OCI-LY7 (cell line): ENCODE measurements at regions of chr3 and their contacts with region 1.

Region 1: GRCh38 chr3:133573054-133573628 is 345 bp upstream of the CDV3 start:
- DNase-seq: peak; percentile 100
- H3K4me3 ChIP-seq: peak overlapping the region; percentile 87
- H3K27ac ChIP-seq: peak overlapping the region; percentile 98
- H3K4me1 ChIP-seq: peaks cover 68% of the 10 kb centered on the region
- CTCF ChIP-seq: no peak; the same call in 1 of the 2 replicates

Region 2: GRCh38 chr3:133227813-133228212 is 345.3 kb before region 1 on chr3:
- CTCF ChIA-PET with region 1: no interaction called
- POLR2A ChIA-PET with region 1: no interaction called
- intact Hi-C with region 1: no loop called
- DNase-seq: no peak
- H3K4me3 ChIP-seq: no peak overlapping the region
- H3K27ac ChIP-seq: no peak overlapping the region
- H3K4me1 ChIP-seq: no peaks in the 10 kb centered on the region
- CTCF ChIP-seq: no peak

Region 3: DNA sequence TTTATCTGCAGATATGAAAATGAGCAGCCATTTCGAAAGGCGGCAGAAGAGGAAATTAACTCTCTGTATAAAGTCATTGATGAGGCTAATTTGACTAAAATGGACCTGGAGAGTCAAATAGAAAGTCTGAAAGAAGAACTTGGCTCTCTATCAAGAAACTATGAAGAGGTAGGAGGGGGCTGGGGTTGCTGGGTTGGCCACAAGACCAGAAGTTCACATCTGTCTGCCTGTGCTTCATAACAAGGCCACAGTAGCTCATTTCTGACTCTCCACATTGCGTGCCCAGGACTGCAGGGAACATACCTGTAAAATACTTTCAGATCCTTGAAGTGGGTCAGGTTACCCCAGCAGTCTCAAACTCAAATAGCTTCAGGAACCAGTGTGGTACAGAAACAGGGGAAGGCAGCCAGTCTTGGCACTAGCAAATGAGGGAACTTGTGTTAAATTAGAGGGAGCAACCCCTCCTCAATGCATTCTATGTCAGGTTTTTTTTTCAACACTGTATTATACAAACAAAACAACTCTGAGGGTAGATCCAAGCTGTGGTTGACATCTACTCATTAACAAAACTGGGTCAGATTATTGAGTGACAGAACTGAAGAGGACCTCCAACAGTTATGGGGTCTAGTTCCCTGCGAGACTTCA is 124.5 kb before region 1 on chr3:
- CTCF ChIA-PET with region 1: interaction called, 3 read pairs
- POLR2A ChIA-PET with region 1: interaction called, 23 read pairs
- intact Hi-C with region 1: loop called (anchors 1 kb)
- DNase-seq: peak; percentile 84
- H3K4me3 ChIP-seq: peak overlapping the region; percentile 58
- H3K27ac ChIP-seq: peak overlapping the region; percentile 84
- H3K4me1 ChIP-seq: peaks cover 86% of the 10 kb centered on the region
- CTCF ChIP-seq: no peak

Region 4: GRCh38 chr3:133464573-133464972 is 108.6 kb before region 1 on chr3:
- CTCF ChIA-PET with region 1: interaction called, 7 read pairs
- POLR2A ChIA-PET with region 1: interaction called, 73 read pairs
- intact Hi-C with region 1: loop called (anchors 1 kb)
- DNase-seq: peak; percentile 77
- H3K4me3 ChIP-seq: no peak overlapping the region
- H3K27ac ChIP-seq: peak overlapping the region; percentile 96
- H3K4me1 ChIP-seq: peaks cover 94% of the 10 kb centered on the region
- CTCF ChIP-seq: peak; percentile 82

Region 5: DNA sequence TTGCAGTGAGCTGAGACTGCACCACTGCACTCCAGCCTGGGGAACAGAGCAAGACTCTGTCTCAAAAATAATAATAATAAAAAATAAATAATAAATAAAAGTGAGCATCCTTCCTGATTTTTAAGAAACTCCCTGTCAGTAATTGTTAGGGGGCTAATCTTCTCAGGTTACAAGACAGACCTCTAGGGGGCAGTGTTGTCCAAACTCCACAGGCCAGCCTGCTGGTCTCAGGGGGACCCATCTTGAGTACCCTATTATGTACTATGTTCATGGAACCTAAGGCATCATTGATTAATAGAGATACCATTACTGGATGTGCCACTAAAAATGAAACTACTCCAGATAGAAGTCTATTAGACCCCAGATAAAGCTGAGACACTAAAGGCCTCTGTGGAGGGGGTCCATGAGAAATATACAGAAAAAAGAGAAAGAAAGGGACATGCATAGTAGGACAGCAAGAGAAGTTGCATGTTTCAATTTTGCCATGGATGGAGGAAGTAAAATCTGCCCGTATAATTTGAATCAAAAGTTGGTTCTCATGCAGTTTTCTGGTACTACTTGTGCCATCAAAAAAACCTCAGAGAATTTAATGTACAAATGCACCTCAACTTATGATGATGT is 85.1 kb before region 1 on chr3:
- CTCF ChIA-PET with region 1: interaction called, 11 read pairs
- POLR2A ChIA-PET with region 1: interaction called, 79 read pairs
- intact Hi-C with region 1: loop called (anchors 1 kb)
- DNase-seq: no peak
- H3K4me3 ChIP-seq: peak overlapping the region; percentile 61
- H3K27ac ChIP-seq: peak overlapping the region; percentile 92
- H3K4me1 ChIP-seq: peaks cover 49% of the 10 kb centered on the region
- CTCF ChIP-seq: peak; percentile 74

Region 6: GRCh38 chr3:133745981-133746711 is 173.0 kb after region 1 on chr3 and contains the start of gene TF:
- CTCF ChIA-PET with region 1: no interaction called
- POLR2A ChIA-PET with region 1: no interaction called
- intact Hi-C with region 1: no loop called
- DNase-seq: no peak
- H3K4me3 ChIP-seq: no peak within 1 kb of the TSS
- H3K27ac ChIP-seq: no peak within 1 kb of the TSS
- H3K4me1 ChIP-seq: no peaks in the 10 kb centered on the region
- CTCF ChIP-seq: no peak
- total RNA-seq, gene TF: 0.25 and 0.93 TPM in 2 replicates

Region 7: DNA sequence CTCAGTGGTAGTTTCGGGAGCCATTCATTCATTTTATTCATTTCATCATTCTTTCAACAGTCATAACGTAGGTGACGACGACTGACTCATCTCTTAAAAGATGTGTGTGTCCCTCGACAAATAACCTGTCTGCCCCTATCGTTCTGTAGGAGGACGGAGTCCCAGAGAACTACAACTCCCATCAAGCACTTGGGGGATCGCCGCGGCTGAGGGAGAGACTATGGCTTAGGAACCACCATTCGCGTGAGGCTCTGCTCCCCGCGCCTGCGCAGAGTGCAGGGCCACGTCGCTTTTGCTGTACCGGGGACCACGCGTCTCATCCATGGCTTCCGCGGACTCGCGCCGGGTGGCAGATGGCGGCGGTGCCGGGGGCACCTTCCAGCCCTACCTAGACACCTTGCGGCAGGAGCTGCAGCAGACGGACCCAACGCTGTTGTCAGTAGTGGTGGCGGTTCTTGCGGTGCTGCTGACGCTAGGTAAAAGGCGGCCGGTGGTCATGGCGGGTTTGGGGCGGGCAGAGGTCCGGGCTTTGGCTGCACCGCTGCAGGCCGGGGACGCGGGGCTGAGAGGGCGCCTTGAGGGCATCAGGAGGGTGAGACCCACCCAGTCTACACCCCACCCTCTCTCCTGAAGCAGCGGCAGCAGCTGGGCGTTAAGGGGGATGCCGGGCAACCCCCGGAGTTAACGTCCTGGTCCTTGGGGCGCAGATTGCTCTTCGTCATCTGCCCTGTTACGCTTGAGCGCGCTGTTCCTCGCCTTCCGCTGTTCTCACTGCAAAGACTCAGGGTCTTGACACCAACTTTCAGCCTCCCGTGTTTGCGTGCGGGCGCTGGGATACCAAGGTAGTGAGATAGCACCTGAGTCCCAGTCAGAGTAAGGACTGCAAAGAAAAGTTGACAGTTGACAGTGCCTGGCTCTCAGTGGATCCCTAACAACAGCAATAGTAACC is 232.7 kb after region 1 on chr3 and contains the start of gene SRPRB:
- CTCF ChIA-PET with region 1: no interaction called
- POLR2A ChIA-PET with region 1: interaction called, 3 read pairs
- intact Hi-C with region 1: loop called (anchors 10 kb)
- DNase-seq: peak; percentile 96
- H3K4me3 ChIP-seq: peak within 1 kb of the TSS; percentile 87
- H3K27ac ChIP-seq: peak within 1 kb of the TSS; percentile 28
- H3K4me1 ChIP-seq: peaks cover 23% of the 10 kb centered on the region
- CTCF ChIP-seq: no peak
- total RNA-seq, gene SRPRB: 36.0 and 39.4 TPM in 2 replicates